Activated B cell treated with CpG ODN at 0.5 μM for 24 hours (primary cell): ENCODE measurements at regions of chr1 and their contacts with region 1.

Region 1: DNA sequence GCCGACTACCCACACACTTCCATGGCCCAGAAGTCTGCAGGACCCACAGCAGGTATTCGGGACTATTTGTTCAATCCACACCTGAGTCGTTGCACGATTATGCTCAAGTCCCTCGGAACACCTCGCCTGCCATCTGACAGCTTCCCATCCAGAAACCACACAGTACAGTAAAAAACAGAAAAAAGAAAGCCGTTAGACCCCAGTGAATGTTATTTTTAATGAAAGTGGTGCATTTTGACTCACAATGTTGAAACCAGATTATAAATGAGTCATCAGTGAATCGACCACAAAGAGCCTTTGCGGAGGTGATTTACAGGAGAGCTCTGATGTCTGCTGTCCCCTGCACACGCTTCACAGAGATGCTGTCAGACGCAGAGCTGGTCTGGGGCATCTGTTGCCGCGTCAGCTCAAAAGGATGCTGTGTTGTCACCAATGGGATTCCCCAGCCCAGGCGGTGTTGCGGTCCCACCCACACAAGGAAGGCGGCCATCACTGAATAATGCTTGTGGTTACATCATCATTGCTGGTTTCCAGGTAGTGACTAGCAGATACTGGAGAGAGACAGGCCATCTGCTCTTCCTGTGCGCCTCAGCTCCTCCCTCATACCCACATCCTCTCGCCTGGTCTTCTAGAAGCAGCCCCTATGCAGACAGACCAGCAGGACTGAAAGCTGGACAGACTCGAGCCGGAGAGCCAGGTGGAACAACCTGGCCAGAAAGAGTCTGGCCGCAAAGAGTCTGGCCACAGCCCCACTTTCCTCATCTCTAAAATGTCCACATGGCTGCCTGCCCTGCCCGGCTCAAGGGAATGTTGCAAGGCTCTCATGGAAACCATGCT is 116.8 kb downstream of the TOMM20 start:
- DNase-seq: peak; percentile 79
- ATAC-seq: peak; percentile 77
- H3K4me3 Mint-ChIP-seq: peak overlapping the region; percentile 47
- H3K27ac Mint-ChIP-seq: peak overlapping the region; percentile 99
- H3K4me1 Mint-ChIP-seq: peaks cover 94% of the 10 kb centered on the region
- H3K27me3 Mint-ChIP-seq: no peaks in the 10 kb centered on the region
- CTCF ChIP-seq: no peak

Region 2: DNA sequence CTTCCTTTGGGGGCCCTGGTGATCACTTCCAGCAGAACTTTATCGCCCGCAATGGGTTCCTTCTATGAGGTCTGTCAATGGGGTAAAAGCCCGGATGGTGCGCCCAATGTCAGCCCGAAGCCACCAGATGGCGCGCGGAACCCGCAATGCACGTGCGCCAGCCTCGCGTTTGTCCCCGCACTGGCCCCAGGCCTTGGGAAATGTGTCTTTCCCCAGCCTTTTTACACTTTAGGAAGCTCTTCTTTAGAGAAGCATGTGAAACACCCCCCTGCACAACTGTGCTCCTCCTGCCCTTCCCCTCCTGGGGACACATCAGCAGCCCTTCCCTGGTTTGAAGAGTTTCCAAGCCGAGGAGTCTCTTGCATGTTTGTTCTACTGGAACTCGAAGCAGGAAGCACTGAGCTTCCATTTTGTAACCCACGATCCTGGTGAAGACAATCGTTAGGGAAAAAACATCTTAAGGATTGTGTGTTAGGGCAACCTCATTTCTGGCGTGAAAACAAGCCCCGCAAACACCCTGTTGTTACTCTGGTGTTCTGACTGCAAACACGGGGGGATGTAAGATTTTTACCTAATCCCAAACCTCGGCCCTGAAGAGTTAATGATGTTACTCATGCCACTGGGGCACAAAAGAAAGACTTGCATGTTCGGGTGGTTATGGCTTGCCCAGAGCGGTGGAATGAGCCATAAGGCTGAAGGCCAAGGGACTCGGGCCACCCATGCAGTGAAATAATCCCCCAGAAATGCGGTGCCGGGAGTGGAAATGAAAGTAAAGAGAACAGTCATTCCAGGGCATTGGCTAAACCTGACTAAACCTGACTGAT is 512.5 kb before region 1 on chr1:
- CTCF ChIA-PET with region 1: interaction called, 6 read pairs
- POLR2A ChIA-PET with region 1: interaction called, 5 read pairs
- intact Hi-C with region 1: loop called (anchors 1 kb)
- DNase-seq: peak; percentile 78
- ATAC-seq: peak; percentile 91
- H3K4me3 Mint-ChIP-seq: peak overlapping the region; percentile 55
- H3K27ac Mint-ChIP-seq: peak overlapping the region; percentile 66
- H3K4me1 Mint-ChIP-seq: peaks cover 28% of the 10 kb centered on the region
- H3K27me3 Mint-ChIP-seq: no peaks in the 10 kb centered on the region
- CTCF ChIP-seq: peak; percentile 38

Region 3: DNA sequence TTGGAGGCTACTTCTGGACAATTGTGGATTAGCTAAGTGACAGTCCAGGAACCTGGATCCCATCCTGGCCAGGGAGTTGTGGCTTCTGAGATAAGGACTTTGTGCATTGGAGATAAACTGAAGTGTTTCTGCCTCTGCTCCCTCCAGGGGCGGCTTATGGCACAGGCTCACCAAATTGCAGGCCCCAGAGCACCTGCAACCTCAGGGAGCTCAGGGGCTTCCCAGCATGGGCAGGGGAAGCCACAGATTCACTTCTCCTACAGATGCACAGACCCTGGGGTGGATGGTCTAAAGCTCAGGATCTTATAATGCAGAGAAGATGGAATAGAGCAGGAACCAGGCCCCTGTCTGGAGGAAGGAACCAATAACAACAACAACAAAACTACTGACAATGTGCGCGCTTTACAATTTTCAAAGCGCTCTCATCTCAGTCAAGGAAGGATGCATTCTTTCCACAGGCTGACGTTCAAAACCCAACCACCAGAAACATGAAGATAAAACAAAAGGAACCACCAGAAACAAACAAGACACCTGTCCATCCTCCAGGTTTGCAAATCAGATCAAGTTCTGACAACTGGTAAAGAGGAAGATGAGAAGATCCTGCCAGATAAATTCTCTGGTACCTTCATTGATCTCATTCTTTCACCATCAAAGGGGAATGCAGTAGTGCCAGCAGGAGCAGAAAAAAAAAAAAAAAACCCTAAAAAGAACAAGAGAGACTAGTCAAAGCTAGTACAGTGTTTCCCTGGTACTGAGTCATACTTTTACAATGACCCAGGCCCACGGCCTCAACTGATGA is 280.8 kb before region 1 on chr1:
- CTCF ChIA-PET with region 1: no interaction called
- POLR2A ChIA-PET with region 1: interaction called, 20 read pairs
- intact Hi-C with region 1: loop called (anchors 1 kb)
- DNase-seq: peak; percentile 37
- ATAC-seq: peak; percentile 81
- H3K4me3 Mint-ChIP-seq: peak overlapping the region; percentile 44
- H3K27ac Mint-ChIP-seq: peak overlapping the region; percentile 79
- H3K4me1 Mint-ChIP-seq: peaks cover 46% of the 10 kb centered on the region
- H3K27me3 Mint-ChIP-seq: no peaks in the 10 kb centered on the region
- CTCF ChIP-seq: no peak

Region 4: GRCh38 chr1:234881893-234882771 is 129.7 kb before region 1 on chr1:
- CTCF ChIA-PET with region 1: interaction called, 3 read pairs
- POLR2A ChIA-PET with region 1: interaction called, 8 read pairs
- intact Hi-C with region 1: loop called (anchors 1 kb)
- DNase-seq: no peak
- ATAC-seq: peak; percentile 70
- H3K4me3 Mint-ChIP-seq: peak overlapping the region; percentile 75
- H3K27ac Mint-ChIP-seq: peak overlapping the region; percentile 82
- H3K4me1 Mint-ChIP-seq: peaks cover 46% of the 10 kb centered on the region
- H3K27me3 Mint-ChIP-seq: no peaks in the 10 kb centered on the region
- CTCF ChIP-seq: no peak

Region 5: GRCh38 chr1:234944439-234945344 is 67.1 kb before region 1 on chr1:
- CTCF ChIA-PET with region 1: no interaction called
- POLR2A ChIA-PET with region 1: interaction called, 10 read pairs
- intact Hi-C with region 1: no loop called
- DNase-seq: no peak
- ATAC-seq: peak; percentile 50
- H3K4me3 Mint-ChIP-seq: peak overlapping the region; percentile 58
- H3K27ac Mint-ChIP-seq: peak overlapping the region; percentile 81
- H3K4me1 Mint-ChIP-seq: peaks cover 39% of the 10 kb centered on the region
- H3K27me3 Mint-ChIP-seq: no peaks in the 10 kb centered on the region
- CTCF ChIP-seq: no peak

Region 6: GRCh38 chr1:234987415-234988154 is 24.2 kb before region 1 on chr1:
- CTCF ChIA-PET with region 1: no interaction called
- POLR2A ChIA-PET with region 1: interaction called, 35 read pairs
- intact Hi-C with region 1: no loop called
- DNase-seq: no peak
- ATAC-seq: peak; percentile 69
- H3K4me3 Mint-ChIP-seq: peak overlapping the region; percentile 52
- H3K27ac Mint-ChIP-seq: peak overlapping the region; percentile 85
- H3K4me1 Mint-ChIP-seq: peaks cover 58% of the 10 kb centered on the region
- H3K27me3 Mint-ChIP-seq: no peaks in the 10 kb centered on the region
- CTCF ChIP-seq: no peak

Region 7: DNA sequence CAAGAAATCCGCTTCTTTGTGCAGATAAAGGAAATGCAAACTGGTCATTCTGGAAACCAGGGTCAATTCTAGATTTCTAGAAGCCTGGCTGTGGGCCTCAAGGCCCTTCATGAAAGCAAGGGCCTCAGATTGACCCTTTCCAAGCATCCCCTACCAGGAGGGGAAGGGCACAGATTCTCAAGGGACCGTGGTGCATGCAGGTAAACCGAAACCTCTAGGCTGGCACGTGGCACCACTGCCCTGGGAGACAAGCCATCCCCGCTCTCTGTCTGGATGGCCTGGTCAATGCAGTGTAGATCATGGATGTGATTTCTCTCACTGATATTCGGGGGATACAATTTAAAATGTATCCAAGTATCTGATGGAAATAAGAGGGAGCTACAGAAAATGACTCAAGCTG is 47.4 kb after region 1 on chr1:
- CTCF ChIA-PET with region 1: no interaction called
- POLR2A ChIA-PET with region 1: no interaction called
- intact Hi-C with region 1: no loop called
- DNase-seq: no peak
- ATAC-seq: no peak
- H3K4me3 Mint-ChIP-seq: no peak overlapping the region
- H3K27ac Mint-ChIP-seq: no peak overlapping the region
- H3K4me1 Mint-ChIP-seq: peaks cover 22% of the 10 kb centered on the region
- H3K27me3 Mint-ChIP-seq: no peaks in the 10 kb centered on the region
- CTCF ChIP-seq: no peak

Region 8: GRCh38 chr1:235075188-235075926 is 63.5 kb after region 1 on chr1:
- CTCF ChIA-PET with region 1: no interaction called
- POLR2A ChIA-PET with region 1: interaction called, 54 read pairs
- intact Hi-C with region 1: loop called (anchors 1 kb)
- DNase-seq: peak; percentile 54
- ATAC-seq: peak; percentile 76
- H3K4me3 Mint-ChIP-seq: peak overlapping the region; percentile 75
- H3K27ac Mint-ChIP-seq: peak overlapping the region; percentile 95
- H3K4me1 Mint-ChIP-seq: peaks cover 37% of the 10 kb centered on the region
- H3K27me3 Mint-ChIP-seq: no peaks in the 10 kb centered on the region
- CTCF ChIP-seq: no peak

Region 9: GRCh38 chr1:235215453-235215852 is 203.6 kb after region 1 on chr1:
- CTCF ChIA-PET with region 1: no interaction called
- POLR2A ChIA-PET with region 1: no interaction called
- intact Hi-C with region 1: no loop called
- DNase-seq: no peak
- ATAC-seq: no peak
- H3K4me3 Mint-ChIP-seq: no peak overlapping the region
- H3K27ac Mint-ChIP-seq: no peak overlapping the region
- H3K4me1 Mint-ChIP-seq: no peaks in the 10 kb centered on the region
- H3K27me3 Mint-ChIP-seq: no peaks in the 10 kb centered on the region
- CTCF ChIP-seq: no peak